Activated CD4-positive, alpha-beta T cell treated with anti-CD3 and anti-CD28 coated beads, Interleukin-2, amount 10 ng/mL, durations not matched to agents 24 days and 14 days (primary cell): ENCODE measurements at regions of chr1 and their contacts with region 1.

Region 1: DNA sequence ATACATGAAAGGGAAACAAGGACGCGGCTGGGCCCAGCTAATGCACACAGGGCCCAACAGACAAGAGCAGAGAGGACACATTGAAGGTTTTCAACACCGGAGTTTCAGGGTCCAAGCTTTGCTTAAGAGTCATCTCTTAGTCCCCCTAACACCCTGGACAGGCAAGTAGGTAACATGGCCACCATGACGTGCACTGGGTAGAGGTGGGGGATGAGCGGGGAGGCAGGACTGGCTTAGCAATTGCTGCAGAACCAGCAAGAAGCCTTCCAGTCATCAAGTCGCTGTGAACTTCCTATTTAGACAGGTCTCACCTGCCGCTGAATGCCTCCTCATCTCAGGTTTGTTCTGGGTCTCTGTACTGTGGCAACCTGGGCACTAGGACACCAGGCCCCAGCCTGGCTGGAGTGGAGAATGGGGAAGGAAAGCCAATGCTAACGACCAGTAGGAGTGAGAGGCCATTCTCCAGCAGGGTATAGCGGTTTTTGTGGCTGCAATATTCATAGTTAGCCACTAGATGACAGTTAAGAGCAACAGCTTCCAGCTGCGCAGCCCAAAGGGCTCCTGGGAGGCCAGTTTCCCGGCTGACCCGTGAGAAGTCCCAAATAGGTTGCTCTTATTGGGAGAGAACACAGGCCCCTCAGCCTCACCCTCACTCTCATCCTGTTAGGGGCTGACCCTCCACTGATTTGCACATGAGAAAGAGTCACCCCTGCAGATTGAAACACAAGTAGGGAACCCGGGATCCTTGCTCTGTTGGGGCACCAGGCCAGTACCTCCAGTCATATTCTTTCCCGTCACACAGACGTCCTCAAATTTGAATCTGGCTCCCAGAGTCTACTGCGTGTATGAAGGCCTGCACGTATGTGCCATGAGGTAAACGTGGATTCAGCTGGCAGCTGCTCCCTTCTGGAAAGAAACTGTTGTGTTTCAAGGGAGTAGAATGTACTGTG is 6.0 kb upstream of the PIGC start:
- DNase-seq: peak; percentile 83
- H3K4me3 Mint-ChIP-seq: peak overlapping the region; percentile 39
- H3K27ac Mint-ChIP-seq: peak overlapping the region; percentile 65
- H3K4me1 Mint-ChIP-seq: peaks cover 27% of the 10 kb centered on the region
- H3K27me3 Mint-ChIP-seq: peaks cover 1% of the 10 kb centered on the region

Region 2: GRCh38 chr1:172269644-172270043 is 180.2 kb before region 1 on chr1:
- intact Hi-C with region 1: loop called (anchors 5 kb)
- DNase-seq: no peak
- H3K4me3 Mint-ChIP-seq: peak overlapping the region; percentile 29
- H3K27ac Mint-ChIP-seq: peak overlapping the region; percentile 88
- H3K4me1 Mint-ChIP-seq: peaks cover 44% of the 10 kb centered on the region
- H3K27me3 Mint-ChIP-seq: no peaks in the 10 kb centered on the region

Region 3: DNA sequence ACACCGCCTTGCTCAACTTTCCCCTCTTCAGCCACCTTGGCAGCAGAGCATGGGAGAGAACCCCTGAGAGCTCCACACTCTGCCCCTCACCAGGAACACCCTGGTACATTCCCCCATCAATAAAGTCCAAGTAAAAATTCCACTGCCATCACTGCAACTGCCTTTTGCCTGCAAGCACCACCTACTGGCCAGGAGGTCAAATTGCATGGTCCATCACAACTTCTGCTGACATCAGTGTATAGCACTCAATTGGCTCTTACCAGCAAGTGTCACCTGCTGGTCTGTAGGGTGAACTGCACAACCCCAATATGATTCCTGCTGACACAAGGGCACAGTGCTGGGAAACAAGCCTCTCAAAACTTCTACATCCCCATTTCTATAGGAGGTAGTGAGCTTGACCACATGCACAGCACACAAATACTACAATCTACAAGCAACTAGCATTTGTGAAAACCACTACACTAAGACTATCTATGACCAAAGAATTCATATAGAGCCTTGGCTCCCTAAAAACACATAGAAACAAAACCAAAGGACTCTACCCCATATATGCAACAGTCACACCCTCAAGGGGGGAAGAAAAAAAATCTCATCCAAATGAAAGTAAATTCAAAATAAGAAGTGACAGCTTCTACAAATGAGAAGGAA is 278.2 kb after region 1 on chr1:
- intact Hi-C with region 1: loop called (anchors 1 kb)
- DNase-seq: peak; percentile 83
- H3K4me3 Mint-ChIP-seq: no peak overlapping the region
- H3K27ac Mint-ChIP-seq: peak overlapping the region; percentile 37
- H3K4me1 Mint-ChIP-seq: peaks cover 17% of the 10 kb centered on the region
- H3K27me3 Mint-ChIP-seq: peaks cover 33% of the 10 kb centered on the region